A673 (cell line): ENCODE measurements at regions of chr1 and their contacts with region 1.

Region 1: GRCh38 chr1:31789259-31790065 is 25.3 kb upstream of the ADGRB2 start:
- DNase-seq: peak; percentile 93
- H3K4me3 ChIP-seq: peak overlapping the region; percentile 56
- H3K27ac ChIP-seq: peak overlapping the region; percentile 18
- H3K4me1 ChIP-seq: peaks cover 9% of the 10 kb centered on the region
- H3K27me3 ChIP-seq: no peaks in the 10 kb centered on the region
- CTCF ChIP-seq: peak; percentile 94

Region 2: DNA sequence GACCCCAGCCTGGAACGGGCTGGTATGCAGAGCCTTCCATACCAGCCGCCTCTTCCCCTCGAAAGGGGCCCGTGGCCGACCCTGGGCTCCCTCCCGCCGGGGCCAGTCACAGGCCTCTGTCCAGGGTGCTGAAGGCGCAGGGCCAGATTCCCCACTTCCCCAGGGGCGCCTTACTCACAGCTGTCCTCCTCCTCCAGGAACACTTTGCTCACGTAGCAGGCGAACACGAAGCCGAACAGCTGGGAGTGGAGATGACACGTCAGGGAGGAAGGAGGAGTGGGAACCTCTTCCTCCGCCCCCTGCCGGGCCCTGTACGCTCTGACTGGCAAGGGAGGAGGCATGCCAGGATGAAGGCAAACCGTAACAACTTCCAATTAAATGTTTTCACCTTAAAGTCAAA is 607.1 kb before region 1 on chr1:
- CTCF ChIA-PET with region 1: interaction called, 10 read pairs
- POLR2A ChIA-PET with region 1: no interaction called
- intact Hi-C with region 1: no loop called
- DNase-seq: peak; percentile 87
- H3K4me3 ChIP-seq: no peak overlapping the region
- H3K27ac ChIP-seq: no peak overlapping the region
- H3K4me1 ChIP-seq: peaks cover 9% of the 10 kb centered on the region
- H3K27me3 ChIP-seq: peaks cover 4% of the 10 kb centered on the region
- CTCF ChIP-seq: no peak; the same call in 1 of the 2 replicates

Region 3: GRCh38 chr1:31548907-31549808 is 240.3 kb before region 1 on chr1:
- CTCF ChIA-PET with region 1: interaction called, 10 read pairs
- POLR2A ChIA-PET with region 1: no interaction called
- intact Hi-C with region 1: no loop called
- DNase-seq: peak; percentile 92
- H3K4me3 ChIP-seq: peak overlapping the region; percentile 34
- H3K27ac ChIP-seq: no peak overlapping the region
- H3K4me1 ChIP-seq: peaks cover 12% of the 10 kb centered on the region
- H3K27me3 ChIP-seq: no peaks in the 10 kb centered on the region
- CTCF ChIP-seq: peak; percentile 94

Region 4: GRCh38 chr1:31663622-31664452 is 125.6 kb before region 1 on chr1:
- CTCF ChIA-PET with region 1: interaction called, 23 read pairs
- POLR2A ChIA-PET with region 1: no interaction called
- intact Hi-C with region 1: loop called (anchors 5 kb)
- DNase-seq: peak; percentile 54
- H3K4me3 ChIP-seq: no peak overlapping the region
- H3K27ac ChIP-seq: no peak overlapping the region
- H3K4me1 ChIP-seq: peaks cover 7% of the 10 kb centered on the region
- H3K27me3 ChIP-seq: no peaks in the 10 kb centered on the region
- CTCF ChIP-seq: peak; percentile 87

Region 5: GRCh38 chr1:31762726-31763670 is 26.5 kb before region 1 on chr1:
- CTCF ChIA-PET with region 1: interaction called, 15 read pairs
- POLR2A ChIA-PET with region 1: no interaction called
- intact Hi-C with region 1: no loop called
- DNase-seq: peak; percentile 82
- H3K4me3 ChIP-seq: peak overlapping the region; percentile 64
- H3K27ac ChIP-seq: no peak overlapping the region
- H3K4me1 ChIP-seq: peaks cover 31% of the 10 kb centered on the region
- H3K27me3 ChIP-seq: no peaks in the 10 kb centered on the region
- CTCF ChIP-seq: peak; percentile 69